ENCODE measurements at regions of chr3 and their contacts with region 1.

Region 1: DNA sequence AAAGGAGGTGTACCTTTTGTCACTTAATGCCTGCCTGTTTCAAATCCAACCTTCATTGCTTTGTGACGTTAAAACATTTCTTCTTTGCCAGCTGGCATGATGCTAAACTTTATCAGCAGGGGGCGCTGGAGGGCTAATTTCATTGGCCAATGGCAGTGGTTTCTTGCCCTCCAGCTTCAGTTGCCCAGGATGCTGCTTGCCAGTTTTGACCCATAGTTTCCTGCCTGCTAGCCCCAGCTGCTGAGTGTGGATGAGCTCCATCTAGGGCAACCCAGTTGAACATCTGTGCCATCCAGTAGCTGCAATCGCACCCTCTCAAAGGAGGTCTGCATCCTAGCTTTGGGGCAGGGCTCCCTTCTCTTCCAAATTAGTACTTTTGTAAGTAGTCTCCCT is 22.1 kb downstream of the ACKR2 start:
- DNase-seq: no peak
- ATAC-seq: peak; percentile 98
- H3K4me3 ChIP-seq: no peak overlapping the region
- H3K27ac ChIP-seq: no peak overlapping the region
- H3K4me1 ChIP-seq: no peaks in the 10 kb centered on the region
- H3K27me3 ChIP-seq: no peaks in the 10 kb centered on the region
- CTCF ChIP-seq: peak; percentile 71 to 80 (median 79)
- EP300 ChIP-seq: no peak
- POLR2A ChIP-seq: no peak
- RAD21 ChIP-seq: peak; percentile 68

Region 2: GRCh38 chr3:42819351-42819965 is 11.9 kb before region 1 on chr3:
- CTCF ChIA-PET with region 1: interaction called, 16 read pairs
- POLR2A ChIA-PET with region 1: no interaction called
- RAD21 ChIA-PET with region 1: interaction called, 3 read pairs
- SMC1A ChIA-PET with region 1: interaction called, 3 read pairs
- in situ Hi-C with region 1: no loop called
- intact Hi-C with region 1: no loop called
- DNase-seq: no peak
- ATAC-seq: peak; percentile 63
- H3K4me3 ChIP-seq: no peak overlapping the region
- H3K27ac ChIP-seq: no peak overlapping the region
- H3K4me1 ChIP-seq: no peaks in the 10 kb centered on the region
- H3K27me3 ChIP-seq: 0 out of 4 replicates have a peak, but pooled peaks cover 0 to 2% of the 10 kb centered on the region in 2 experiments
- CTCF ChIP-seq: no peak
- EP300 ChIP-seq: no peak
- POLR2A ChIP-seq: no peak
- RAD21 ChIP-seq: no peak